Stomach (tissue), 19 donors: ENCODE measurements at regions of chr7 and their contacts with region 1.

Region 1: DNA sequence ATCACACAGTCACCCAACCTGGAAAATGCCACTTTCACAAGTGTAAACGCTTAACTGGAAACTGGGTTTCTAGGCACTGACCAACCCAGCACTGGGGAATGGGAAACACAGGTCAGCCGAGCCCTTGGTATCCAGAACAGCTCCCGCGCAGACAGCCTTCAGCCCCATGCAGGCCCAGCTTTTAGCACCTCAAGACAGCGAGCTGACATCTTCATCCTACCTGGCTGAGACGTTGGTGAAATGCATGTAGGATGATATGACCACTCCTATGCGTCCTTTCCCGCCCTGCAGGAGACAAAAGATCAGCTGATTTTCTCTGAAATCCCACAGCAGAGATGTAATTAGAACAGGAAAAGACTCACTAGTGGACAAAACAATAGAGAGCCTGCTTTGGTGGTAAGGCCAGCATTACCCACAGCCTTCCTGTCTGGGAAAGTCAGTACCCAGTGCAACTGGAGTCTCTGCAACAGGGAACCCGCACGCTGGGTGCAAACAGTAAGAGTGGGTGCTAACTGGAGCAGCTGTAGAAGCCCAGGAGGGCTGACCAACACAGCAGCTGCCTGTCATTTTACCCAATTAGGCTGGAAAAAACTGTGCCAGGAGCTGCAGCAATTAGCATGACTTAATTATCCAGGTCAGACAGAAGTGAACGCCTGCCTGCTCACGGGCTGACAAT is 153.7 kb downstream of the TNS3 start:
- DNase-seq: peak in 1 of 2 donors; percentile 63
- H3K4me3 ChIP-seq: no peak overlapping the region
- H3K27ac ChIP-seq: peak overlapping the region in 3 of 5 donors; percentile 20 to 55 (median 26)
- H3K4me1 ChIP-seq: peaks cover 9 to 20% (median 15%) of the 10 kb centered on the region in 4 donors
- H3K27me3 ChIP-seq: no peaks in the 10 kb centered on the region
- CTCF ChIP-seq: no peak
- EP300 ChIP-seq: no peak
- POLR2A ChIP-seq: no peak

Region 2: DNA sequence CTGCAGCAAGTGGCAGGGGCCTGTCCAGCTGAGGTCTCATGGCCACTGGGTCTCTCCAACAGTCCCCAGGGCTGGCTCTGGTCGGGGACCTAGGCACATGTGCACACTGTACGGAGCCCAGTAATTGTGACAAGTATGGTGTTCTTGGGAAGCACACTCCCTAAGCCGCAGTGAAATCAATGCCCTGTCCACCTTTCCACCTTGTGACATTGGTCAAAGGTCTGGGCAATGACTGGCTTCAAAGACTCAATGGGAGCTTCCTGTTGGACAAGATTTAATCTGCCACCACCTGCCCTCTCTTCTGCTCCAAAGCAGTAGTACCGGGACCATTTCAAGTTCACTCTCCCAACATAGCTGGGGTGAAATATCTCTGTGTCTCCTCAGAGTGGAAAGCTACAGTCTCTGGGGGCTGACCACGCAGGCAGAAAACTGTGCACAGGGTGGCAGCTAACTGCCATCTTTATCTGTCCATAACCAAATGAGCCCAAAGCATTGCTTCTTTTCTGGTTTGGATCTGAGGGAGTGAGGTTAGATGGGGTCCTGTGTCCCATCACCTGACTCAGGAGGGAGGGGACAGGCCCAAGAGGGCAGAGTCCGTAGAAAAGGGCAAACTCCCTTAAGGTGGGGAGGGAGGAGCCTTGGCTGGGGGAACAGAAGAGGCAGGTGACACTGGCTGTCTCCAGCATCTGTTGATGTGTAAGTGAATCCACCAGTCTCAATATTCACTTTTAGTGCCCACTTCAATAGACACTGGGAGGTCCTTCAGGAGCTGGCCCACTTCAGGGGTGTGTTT is 154.1 kb before region 1 on chr7:
- intact Hi-C with region 1: loop called (anchors 10 kb)
- DNase-seq: no peak
- H3K4me3 ChIP-seq: no peak overlapping the region
- H3K27ac ChIP-seq: no peak overlapping the region
- H3K4me1 ChIP-seq: no peaks in the 10 kb centered on the region
- H3K27me3 ChIP-seq: no peaks in the 10 kb centered on the region
- CTCF ChIP-seq: no peak
- EP300 ChIP-seq: no peak
- POLR2A ChIP-seq: no peak

Region 3: DNA sequence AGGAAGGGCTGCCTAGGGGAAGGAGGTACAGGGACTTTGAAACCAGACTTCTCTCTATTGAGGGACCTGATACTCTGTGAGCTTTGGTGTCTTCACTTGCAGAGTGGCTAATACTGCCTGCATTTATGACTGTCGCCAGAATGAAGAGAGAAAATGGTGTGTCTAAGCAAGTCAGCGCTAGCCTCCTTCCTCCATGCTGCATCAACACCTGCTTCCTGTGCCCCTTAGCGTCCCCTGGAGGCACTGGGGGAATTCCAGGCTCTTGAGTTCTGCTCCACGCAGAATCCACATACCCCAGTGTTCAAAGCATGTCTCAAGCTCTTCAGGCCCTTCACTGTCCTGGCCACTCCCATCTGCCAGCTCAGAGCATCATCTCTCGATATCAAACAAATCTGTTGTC is 379.5 kb after region 1 on chr7:
- intact Hi-C with region 1: loop called (anchors 10 kb)
- DNase-seq: no peak
- H3K4me3 ChIP-seq: no peak overlapping the region
- H3K27ac ChIP-seq: peak overlapping the region in 1 of 5 donors; percentile 9
- H3K4me1 ChIP-seq: peaks cover 0 to 16% (median 11%) of the 10 kb centered on the region in 4 donors
- H3K27me3 ChIP-seq: no peaks in the 10 kb centered on the region
- CTCF ChIP-seq: no peak
- EP300 ChIP-seq: no peak
- POLR2A ChIP-seq: no peak